HEK293 (cell line): ENCODE measurements at regions of chr6 and their contacts with region 1.

Region 1: GRCh38 chr6:47097092-47097945 is 55.2 kb upstream of the ADGRF1 start:
- H3K4me3 ChIP-seq: no peak overlapping the region
- H3K27ac ChIP-seq: no peak overlapping the region
- H3K4me1 ChIP-seq: no peaks in the 10 kb centered on the region
- CTCF ChIP-seq: peak; percentile 56

Region 2: GRCh38 chr6:47111685-47112084 is 14.4 kb after region 1 on chr6:
- CTCF ChIA-PET with region 1: interaction called, 19 read pairs
- POLR2A ChIA-PET with region 1: interaction called, 3 read pairs
- H3K4me3 ChIP-seq: no peak overlapping the region
- H3K27ac ChIP-seq: no peak overlapping the region
- H3K4me1 ChIP-seq: 0 out of 2 replicates have a peak, but pooled peaks cover 2% of the 10 kb centered on the region
- CTCF ChIP-seq: no peak

Region 3: DNA sequence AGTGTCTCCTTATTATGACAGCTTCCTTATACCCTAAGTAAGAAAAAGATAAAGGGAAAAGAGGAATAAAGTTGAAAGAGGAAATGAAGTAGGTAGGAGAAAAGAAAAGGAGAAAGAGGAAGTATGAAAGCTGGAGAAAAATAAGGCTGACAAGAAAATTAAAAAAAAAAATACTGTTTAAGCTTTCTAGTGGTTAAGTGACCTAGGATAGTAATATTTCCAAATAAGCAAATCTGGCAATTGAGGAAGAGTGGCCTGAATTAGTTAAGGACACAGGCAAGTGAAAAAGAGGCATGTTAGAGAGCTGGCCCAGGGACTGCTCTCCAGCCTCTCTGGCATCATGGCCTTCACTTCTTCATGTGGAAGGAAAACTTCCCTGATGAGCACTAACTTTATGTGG is 21.3 kb after region 1 on chr6:
- CTCF ChIA-PET with region 1: interaction called, 13 read pairs
- POLR2A ChIA-PET with region 1: no interaction called
- H3K4me3 ChIP-seq: no peak overlapping the region
- H3K27ac ChIP-seq: no peak overlapping the region
- H3K4me1 ChIP-seq: no peaks in the 10 kb centered on the region
- CTCF ChIP-seq: no peak

Region 4: DNA sequence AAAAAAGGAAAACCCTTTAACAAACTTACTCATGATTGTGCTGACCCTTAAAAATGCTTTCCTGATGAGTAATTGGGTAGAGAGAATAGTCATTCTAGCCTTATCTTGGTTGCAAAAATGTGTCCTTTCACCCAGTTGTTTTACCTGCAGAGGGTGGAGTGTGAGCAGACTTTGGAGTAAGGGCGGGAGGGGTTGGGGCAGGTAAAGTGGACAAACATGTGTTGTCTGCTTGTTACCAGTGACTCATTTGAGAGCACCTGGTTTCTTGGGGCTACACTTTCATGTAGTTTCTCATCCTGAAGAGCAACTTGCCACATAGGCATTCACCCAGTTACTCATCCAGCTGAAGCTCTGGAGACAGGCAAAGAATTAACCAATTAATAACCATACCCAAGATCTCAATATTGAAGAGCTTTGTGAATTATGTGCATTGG is 91.3 kb after region 1 on chr6:
- CTCF ChIA-PET with region 1: no interaction called
- POLR2A ChIA-PET with region 1: no interaction called
- H3K4me3 ChIP-seq: no peak overlapping the region
- H3K27ac ChIP-seq: no peak overlapping the region
- H3K4me1 ChIP-seq: no peaks in the 10 kb centered on the region
- CTCF ChIP-seq: no peak

Region 5: GRCh38 chr6:47309291-47310130 is 212.2 kb after region 1 on chr6 and contains the start of gene TNFRSF21:
- CTCF ChIA-PET with region 1: interaction called, 230 read pairs
- POLR2A ChIA-PET with region 1: interaction called, 11 read pairs
- H3K4me3 ChIP-seq: peak within 1 kb of the TSS; percentile 84
- H3K27ac ChIP-seq: peak within 1 kb of the TSS; percentile 85
- H3K4me1 ChIP-seq: peaks cover 8% of the 10 kb centered on the region
- CTCF ChIP-seq: peak; percentile 90